AG04449 (cell line): ENCODE measurements at regions of chr1 and their contacts with region 1.

Region 1: DNA sequence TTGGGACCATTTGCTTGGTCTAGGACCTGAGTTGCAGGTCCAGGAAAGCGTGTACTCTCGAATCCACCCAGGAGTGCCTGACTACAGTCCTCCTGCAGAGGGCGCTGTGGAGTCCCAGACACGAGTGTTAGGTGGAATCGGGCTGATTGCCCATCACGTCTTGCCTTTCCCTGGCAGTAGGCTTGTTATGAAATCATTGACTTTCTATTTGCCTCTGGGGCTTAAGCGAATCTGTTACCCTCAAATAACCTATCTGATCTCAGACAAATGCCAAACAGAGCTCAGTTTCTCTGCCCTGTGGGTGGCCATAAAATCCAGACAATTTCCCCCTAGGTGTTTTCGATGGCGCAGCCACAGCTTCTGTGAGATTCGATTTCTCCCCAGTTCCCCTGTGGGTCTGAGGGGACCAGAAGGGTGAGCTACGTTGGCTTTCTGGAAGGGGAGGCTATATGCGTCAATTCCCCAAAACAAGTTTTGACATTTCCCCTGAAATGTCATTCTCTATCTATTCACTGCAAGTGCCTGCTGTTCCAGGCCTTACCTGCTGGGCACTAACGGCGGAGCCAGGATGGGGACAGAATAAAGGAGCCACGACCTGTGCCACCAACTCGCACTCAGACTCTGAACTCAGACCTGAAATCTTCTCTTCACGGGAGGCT is at the start of gene IL20:
- DNase-seq: peak; percentile 40
- H3K4me3 ChIP-seq: no peak within 1 kb of the TSS
- CTCF ChIP-seq: peak; percentile 90

Region 2: GRCh38 chr1:206537141-206537540 is 328.0 kb before region 1 on chr1:
- CTCF ChIA-PET with region 1: no interaction called
- POLR2A ChIA-PET with region 1: no interaction called
- DNase-seq: no peak
- H3K4me3 ChIP-seq: no peak overlapping the region
- CTCF ChIP-seq: no peak

Region 3: DNA sequence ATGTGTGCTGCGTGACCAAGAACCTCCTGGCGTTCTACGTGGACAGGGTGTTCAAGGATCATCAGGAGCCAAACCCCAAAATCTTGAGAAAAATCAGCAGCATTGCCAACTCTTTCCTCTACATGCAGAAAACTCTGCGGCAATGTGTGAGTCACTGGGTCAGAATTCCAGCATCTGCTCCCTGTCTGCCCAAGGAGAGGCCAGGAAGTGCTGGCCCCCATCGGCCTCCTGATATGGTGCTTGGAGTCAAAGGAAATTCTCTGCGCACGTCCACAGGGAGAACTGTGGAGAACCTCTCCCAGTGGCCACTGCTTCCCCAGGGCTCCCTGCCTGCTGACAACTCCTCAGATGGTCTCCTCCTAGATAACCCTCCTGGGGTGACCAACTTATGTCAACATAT is 25.3 kb before region 1 on chr1:
- CTCF ChIA-PET with region 1: interaction called, 11 read pairs
- POLR2A ChIA-PET with region 1: no interaction called
- DNase-seq: peak; percentile 75
- H3K4me3 ChIP-seq: no peak overlapping the region
- CTCF ChIP-seq: no peak

Region 4: GRCh38 chr1:206846487-206846886 is 18.7 kb before region 1 on chr1:
- CTCF ChIA-PET with region 1: interaction called, 16 read pairs
- POLR2A ChIA-PET with region 1: no interaction called
- DNase-seq: no peak
- H3K4me3 ChIP-seq: no peak overlapping the region
- CTCF ChIP-seq: no peak

Region 5: DNA sequence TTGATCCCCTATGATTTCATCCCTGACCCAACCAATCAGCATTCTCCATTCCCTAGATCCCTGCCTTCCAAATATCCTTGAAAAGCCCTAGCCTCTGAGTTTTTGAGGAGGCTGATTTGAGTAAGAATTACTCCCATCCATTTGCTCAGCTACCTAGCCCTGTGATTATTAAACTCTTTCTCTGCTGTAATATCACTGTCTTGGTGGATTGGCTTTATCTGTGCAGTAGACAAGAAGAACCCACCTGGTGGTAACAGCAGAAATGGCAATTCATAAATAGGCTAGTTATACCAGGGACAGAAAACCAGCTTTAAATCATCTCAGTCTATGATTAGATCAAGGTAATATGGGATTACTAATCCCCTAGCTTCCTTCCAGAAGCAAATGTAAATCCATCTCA is 13.3 kb after region 1 on chr1:
- CTCF ChIA-PET with region 1: interaction called, 16 read pairs
- POLR2A ChIA-PET with region 1: no interaction called
- DNase-seq: no peak
- H3K4me3 ChIP-seq: no peak overlapping the region
- CTCF ChIP-seq: no peak

Region 6: GRCh38 chr1:206885341-206886060 is 20.4 kb after region 1 on chr1:
- CTCF ChIA-PET with region 1: interaction called, 16 read pairs
- POLR2A ChIA-PET with region 1: no interaction called
- DNase-seq: no peak
- H3K4me3 ChIP-seq: no peak overlapping the region
- CTCF ChIP-seq: no peak

Region 7: GRCh38 chr1:206890690-206891089 is 25.5 kb after region 1 on chr1:
- CTCF ChIA-PET with region 1: interaction called, 16 read pairs
- POLR2A ChIA-PET with region 1: no interaction called
- DNase-seq: no peak
- H3K4me3 ChIP-seq: no peak overlapping the region
- CTCF ChIP-seq: no peak

Region 8: GRCh38 chr1:206905280-206906164 is 40.4 kb after region 1 on chr1:
- CTCF ChIA-PET with region 1: interaction called, 27 read pairs
- POLR2A ChIA-PET with region 1: no interaction called
- DNase-seq: peak; percentile 70
- H3K4me3 ChIP-seq: no peak overlapping the region
- CTCF ChIP-seq: no peak

Region 9: GRCh38 chr1:207001492-207002245 is 136.5 kb after region 1 on chr1:
- CTCF ChIA-PET with region 1: no interaction called
- POLR2A ChIA-PET with region 1: no interaction called
- DNase-seq: no peak
- H3K4me3 ChIP-seq: no peak overlapping the region
- CTCF ChIP-seq: no peak